Activated T-helper 1 cell treated with anti-CD3 and anti-CD28 coated beads, Interleukin-12 subunit alpha, Interleukin-12 subunit beta, Interleukin-2, Interleukin-4 antibody, amounts not matched to agents 30 ng/mL and 10 ng/mL and 1 ng/mL, durations not matched to agents 14 hours and 24 hours and 36 hours (primary cell): ENCODE measurements at regions of chr1 and their contacts with region 1.

Region 1: DNA sequence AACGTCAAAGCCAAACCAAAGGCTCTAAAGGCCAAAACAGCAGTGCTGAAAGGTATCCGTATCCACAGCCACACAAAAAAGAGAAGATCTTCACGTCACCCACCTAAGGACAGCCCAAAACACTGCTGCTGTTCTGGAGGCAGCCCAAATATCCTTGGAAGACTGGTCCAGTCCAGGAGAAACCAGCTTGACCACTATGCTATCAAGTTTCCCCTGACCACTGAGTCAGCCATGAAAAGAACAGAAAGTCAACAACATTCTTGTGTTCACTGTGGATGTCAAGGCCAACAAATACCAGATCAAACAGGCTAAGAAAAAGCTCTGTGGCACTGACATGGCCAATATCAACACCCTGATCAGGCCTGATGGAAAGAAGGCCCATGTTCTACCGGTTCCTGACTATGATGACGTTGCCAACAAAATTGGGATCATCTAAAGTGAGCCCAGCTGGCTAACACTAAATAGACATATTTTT is 32.0 kb downstream of the ARID4B start:
- DNase-seq: no peak
- H3K4me3 Mint-ChIP-seq: no peak overlapping the region
- H3K27ac Mint-ChIP-seq: no peak overlapping the region
- H3K4me1 Mint-ChIP-seq: peaks cover 49% of the 10 kb centered on the region
- H3K27me3 Mint-ChIP-seq: no peaks in the 10 kb centered on the region

Region 2: DNA sequence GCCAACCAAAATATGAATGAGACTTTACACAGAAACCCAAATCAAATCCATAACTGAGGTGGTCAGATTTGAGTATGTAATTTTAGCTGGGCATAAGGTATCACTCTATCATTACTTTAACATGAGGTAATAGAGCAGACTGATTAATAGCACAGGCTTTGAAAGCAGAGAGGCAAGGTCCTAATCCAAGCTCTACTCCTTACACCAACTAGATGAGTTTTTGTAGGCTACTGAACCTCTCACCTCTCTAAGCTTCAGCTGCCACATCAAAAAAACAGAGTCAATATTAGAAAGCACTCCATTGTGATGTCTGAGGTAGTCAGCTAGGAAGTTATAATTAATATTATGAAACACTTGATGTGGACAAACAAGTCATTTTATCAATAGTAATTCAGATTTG is 31.6 kb before region 1 on chr1:
- intact Hi-C with region 1: loop called (anchors 5 kb)
- DNase-seq: no peak
- H3K4me3 Mint-ChIP-seq: no peak overlapping the region
- H3K27ac Mint-ChIP-seq: no peak overlapping the region
- H3K4me1 Mint-ChIP-seq: peaks cover 38% of the 10 kb centered on the region
- H3K27me3 Mint-ChIP-seq: no peaks in the 10 kb centered on the region

Region 3: DNA sequence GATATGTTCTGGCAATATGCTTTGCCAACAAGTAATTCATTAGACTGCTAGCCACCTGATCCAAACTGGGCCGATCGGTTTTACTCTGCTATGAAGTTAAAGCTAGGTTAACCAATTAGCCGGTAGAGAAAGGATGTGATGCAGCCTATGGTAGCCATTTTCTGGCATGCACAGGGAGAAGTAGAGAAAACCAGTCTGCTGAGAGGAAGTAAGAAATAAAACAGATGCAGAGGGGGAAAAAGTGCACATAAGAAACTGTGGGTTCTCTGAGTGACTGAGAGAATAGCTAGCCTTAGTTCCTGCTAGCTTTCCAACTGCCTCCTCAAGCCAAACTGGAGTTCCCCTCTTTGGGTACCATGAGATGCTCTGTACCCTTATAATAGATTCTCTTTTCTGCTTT is 20.7 kb before region 1 on chr1:
- intact Hi-C with region 1: loop called (anchors 2 kb)
- DNase-seq: no peak
- H3K4me3 Mint-ChIP-seq: no peak overlapping the region
- H3K27ac Mint-ChIP-seq: peak overlapping the region; percentile 68
- H3K4me1 Mint-ChIP-seq: peaks cover 46% of the 10 kb centered on the region
- H3K27me3 Mint-ChIP-seq: no peaks in the 10 kb centered on the region

Region 4: DNA sequence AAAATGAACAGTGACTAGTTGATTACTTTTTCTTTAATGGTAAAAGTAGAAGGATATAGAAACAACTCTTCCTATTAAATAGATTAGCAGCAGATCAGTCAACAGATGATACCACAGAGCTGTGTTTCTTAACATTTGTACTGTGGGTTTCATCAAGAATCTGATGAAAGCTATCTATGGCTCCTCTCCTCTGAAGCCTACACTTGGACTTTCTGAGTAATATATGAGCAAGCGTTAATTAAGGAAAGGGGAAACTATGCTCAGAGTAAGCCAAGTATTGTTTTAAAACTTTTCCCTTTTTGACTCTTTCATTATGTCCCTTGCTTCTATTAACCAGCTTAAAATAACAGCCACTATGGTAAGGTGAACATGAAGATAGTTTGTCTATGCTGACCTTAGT is 21.2 kb after region 1 on chr1:
- intact Hi-C with region 1: loop called (anchors 2 kb)
- DNase-seq: no peak
- H3K4me3 Mint-ChIP-seq: no peak overlapping the region
- H3K27ac Mint-ChIP-seq: peak overlapping the region; percentile 49
- H3K4me1 Mint-ChIP-seq: peaks cover 71% of the 10 kb centered on the region
- H3K27me3 Mint-ChIP-seq: no peaks in the 10 kb centered on the region

Region 5: GRCh38 chr1:235513495-235514366 is 217.8 kb after region 1 on chr1:
- intact Hi-C with region 1: no loop called
- DNase-seq: no peak
- H3K4me3 Mint-ChIP-seq: no peak overlapping the region
- H3K27ac Mint-ChIP-seq: no peak overlapping the region
- H3K4me1 Mint-ChIP-seq: peaks cover 12% of the 10 kb centered on the region
- H3K27me3 Mint-ChIP-seq: peaks cover 22% of the 10 kb centered on the region